ENCODE measurements at regions of chr18 and their contacts with region 1.

Region 1: GRCh38 chr18:48445540-48445939 is 36.4 kb upstream of the ZBTB7C start:
- DNase-seq: peak; percentile 62
- ATAC-seq: peak; percentile 81
- H3K4me3 ChIP-seq: no peak overlapping the region
- H3K27ac ChIP-seq: no peak overlapping the region
- H3K4me1 ChIP-seq: peaks cover 0 to 13% of the 10 kb centered on the region in 2 experiments; a peak in 2 of 4 replicates
- H3K27me3 ChIP-seq: peaks cover 16% of the 10 kb centered on the region; the same call in 1 of the 2 replicates
- CTCF ChIP-seq: peak; percentile 72 to 99 (median 92); a peak in 5 of 6 replicates
- POLR2A ChIP-seq: no peak
- RAD21 ChIP-seq: peak; percentile 64

Region 2: GRCh38 chr18:47772374-47773248 is 672.9 kb before region 1 on chr18:
- CTCF ChIA-PET with region 1: interaction called, 3 read pairs
- POLR2A ChIA-PET with region 1: no interaction called
- RAD21 ChIA-PET with region 1: no interaction called
- intact Hi-C with region 1: loop called (anchors 10 kb)
- DNase-seq: peak; percentile 60
- ATAC-seq: peak; percentile 96
- H3K4me3 ChIP-seq: no peak overlapping the region
- H3K27ac ChIP-seq: 0 out of 2 replicates have a peak overlapping the region, but pooled peaks have one; percentile 26
- H3K4me1 ChIP-seq: peaks cover 0 to 6% of the 10 kb centered on the region in 2 experiments; a peak in 3 of 4 replicates
- H3K27me3 ChIP-seq: no peaks in the 10 kb centered on the region
- CTCF ChIP-seq: peak; percentile 79 to 96 (median 91)
- POLR2A ChIP-seq: no peak
- RAD21 ChIP-seq: peak; percentile 92

Region 3: DNA sequence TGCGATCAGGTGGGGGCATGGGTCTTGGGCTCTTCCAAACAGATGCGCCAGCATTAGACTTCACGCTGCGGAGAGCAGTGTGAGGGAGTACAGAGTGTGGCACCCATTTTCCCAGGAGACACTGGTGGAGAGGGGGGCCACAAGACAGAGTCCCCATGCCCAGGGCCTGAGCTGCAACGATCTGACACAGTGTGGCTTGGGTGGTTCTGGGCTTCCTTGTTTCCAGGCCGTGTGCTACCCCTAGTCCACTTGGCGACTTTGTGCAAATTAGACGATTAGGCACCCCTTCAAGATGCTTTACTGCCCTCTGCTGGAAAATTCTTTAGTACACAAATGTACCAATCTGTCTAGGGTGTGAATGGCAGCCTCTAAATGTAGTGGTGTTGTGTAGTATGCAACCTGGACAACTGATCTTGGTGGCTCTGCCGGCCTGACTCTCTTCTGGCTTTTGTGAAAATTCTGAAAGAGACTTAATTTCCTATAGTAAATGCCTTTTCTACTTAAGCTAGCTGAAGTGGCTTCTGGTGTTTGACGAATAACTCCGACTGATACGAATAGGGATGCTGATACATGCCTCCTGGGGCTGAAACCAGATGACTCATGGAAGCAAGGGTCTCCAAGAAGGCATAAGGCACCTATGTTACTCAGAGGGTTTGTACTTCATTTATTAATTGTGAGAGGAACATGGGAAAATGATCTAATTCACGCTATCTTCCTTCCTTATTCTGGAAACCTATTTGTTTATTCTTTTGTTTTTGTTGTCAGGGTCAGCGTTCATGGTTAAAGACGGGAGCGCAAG is 422.8 kb before region 1 on chr18:
- CTCF ChIA-PET with region 1: interaction called, 34 read pairs
- POLR2A ChIA-PET with region 1: no interaction called
- RAD21 ChIA-PET with region 1: interaction called in 1 of 2 experiments, 3 read pairs
- intact Hi-C with region 1: loop called (anchors 2 kb)
- DNase-seq: peak; percentile 62
- ATAC-seq: peak; percentile 83
- H3K4me3 ChIP-seq: no peak overlapping the region
- H3K27ac ChIP-seq: no peak overlapping the region
- H3K4me1 ChIP-seq: peaks cover 4 to 8% of the 10 kb centered on the region in 2 experiments; a peak in 3 of 4 replicates
- H3K27me3 ChIP-seq: no peaks in the 10 kb centered on the region; the same call in 1 of the 2 replicates
- CTCF ChIP-seq: peak; percentile 51 to 81 (median 66); a peak in 5 of 6 replicates
- POLR2A ChIP-seq: no peak
- RAD21 ChIP-seq: peak; percentile 88

Region 4: DNA sequence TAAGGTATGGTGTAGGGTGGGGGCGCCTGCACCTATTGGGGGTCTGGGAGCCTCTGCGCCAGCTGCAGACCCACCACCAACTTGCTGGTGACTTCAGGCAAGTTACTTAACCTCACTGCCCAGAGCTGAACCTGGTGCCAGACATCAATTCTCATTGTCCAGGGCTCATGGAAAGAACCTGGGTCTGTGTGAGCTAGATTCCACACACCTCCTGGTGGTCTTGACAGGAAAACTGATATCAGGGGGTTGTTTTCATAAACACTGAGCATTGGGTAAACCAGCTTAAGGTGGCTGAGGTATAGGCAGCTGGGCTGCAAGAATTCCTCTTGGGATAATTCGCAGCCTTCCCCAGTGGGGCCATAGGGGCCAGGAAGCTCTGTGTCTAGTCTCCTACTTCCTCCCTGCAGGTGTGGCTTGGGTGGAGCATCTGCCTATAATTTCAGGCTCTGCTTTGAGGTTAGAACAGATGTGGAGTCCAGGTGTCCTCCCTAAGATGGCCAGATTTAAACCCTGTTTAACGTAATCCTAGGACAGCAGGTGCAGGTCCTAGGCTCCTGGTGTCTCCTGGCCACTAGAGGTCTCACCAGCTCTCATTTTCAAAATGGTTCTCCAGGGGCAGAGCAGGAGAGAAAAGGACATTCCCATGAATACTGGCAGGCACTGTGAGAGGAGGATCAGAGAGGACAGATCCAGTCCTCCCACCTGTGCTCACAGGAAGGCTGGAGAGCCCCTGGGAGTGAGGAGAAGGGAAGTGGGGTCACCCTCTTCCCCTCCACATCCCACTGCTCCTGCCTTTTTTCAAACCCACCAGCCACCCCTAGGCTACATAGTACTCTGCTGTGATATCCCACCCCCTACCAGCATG is 414.7 kb before region 1 on chr18:
- CTCF ChIA-PET with region 1: interaction called, 34 read pairs
- POLR2A ChIA-PET with region 1: no interaction called
- RAD21 ChIA-PET with region 1: no interaction called
- intact Hi-C with region 1: loop called (anchors 1 kb)
- DNase-seq: peak; percentile 51
- ATAC-seq: peak; percentile 94
- H3K4me3 ChIP-seq: no peak overlapping the region
- H3K27ac ChIP-seq: no peak overlapping the region
- H3K4me1 ChIP-seq: peaks cover 6 to 9% of the 10 kb centered on the region in 2 experiments; a peak in 2 of 4 replicates
- H3K27me3 ChIP-seq: no peaks in the 10 kb centered on the region
- CTCF ChIP-seq: peak; percentile 75 to 88 (median 84)
- POLR2A ChIP-seq: no peak
- RAD21 ChIP-seq: peak; percentile 82

Region 5: GRCh38 chr18:48037481-48038271 is 407.9 kb before region 1 on chr18:
- CTCF ChIA-PET with region 1: interaction called, 22 read pairs
- POLR2A ChIA-PET with region 1: interaction called, 5 read pairs
- RAD21 ChIA-PET with region 1: no interaction called
- intact Hi-C with region 1: no loop called
- DNase-seq: peak; percentile 26
- ATAC-seq: peak; percentile 94
- H3K4me3 ChIP-seq: no peak overlapping the region
- H3K27ac ChIP-seq: no peak overlapping the region
- H3K4me1 ChIP-seq: peaks cover 0 to 10% of the 10 kb centered on the region in 2 experiments; a peak in 1 of 4 replicates
- H3K27me3 ChIP-seq: no peaks in the 10 kb centered on the region
- CTCF ChIP-seq: peak; percentile 63 to 92 (median 69)
- POLR2A ChIP-seq: no peak
- RAD21 ChIP-seq: peak; percentile 82

Region 6: DNA sequence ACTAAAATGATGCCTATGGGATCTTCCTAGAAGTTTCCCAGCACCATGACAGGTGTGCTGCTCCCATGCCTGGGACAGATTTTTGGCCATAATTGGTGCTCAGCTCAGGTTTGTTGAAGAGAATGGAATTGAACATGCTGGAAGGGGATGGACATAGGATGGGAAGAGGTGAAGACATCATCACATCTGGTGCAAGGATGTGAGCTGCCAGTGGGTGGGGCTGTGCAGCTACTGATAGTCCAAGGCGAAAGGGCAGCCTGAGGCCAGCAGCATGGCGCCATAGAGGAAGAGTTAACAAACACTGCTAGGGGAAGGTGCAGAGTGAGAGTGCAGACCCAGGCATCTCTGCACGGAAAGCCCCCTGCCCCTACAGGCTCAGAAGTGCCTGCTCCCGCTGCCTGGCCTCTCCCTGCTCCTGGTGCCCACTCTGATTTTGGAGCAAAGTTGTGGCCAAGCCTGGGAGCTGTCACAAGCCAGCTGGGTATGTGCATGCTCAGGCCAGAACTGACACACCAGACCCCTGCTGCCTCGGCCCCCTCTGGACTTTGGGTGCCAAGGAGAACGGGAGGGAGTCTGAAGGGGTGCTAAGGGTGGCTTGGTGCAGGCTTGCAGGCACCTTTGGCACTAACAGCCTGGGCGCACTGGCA is 214.9 kb before region 1 on chr18:
- CTCF ChIA-PET with region 1: interaction called, 47 read pairs
- POLR2A ChIA-PET with region 1: interaction called, 3 read pairs
- RAD21 ChIA-PET with region 1: interaction called, 4 to 8 read pairs
- intact Hi-C with region 1: loop called (anchors 1 kb)
- DNase-seq: peak; percentile 57
- ATAC-seq: peak; percentile 98
- H3K4me3 ChIP-seq: no peak overlapping the region
- H3K27ac ChIP-seq: no peak overlapping the region
- H3K4me1 ChIP-seq: peaks cover 0 to 5% of the 10 kb centered on the region in 2 experiments; a peak in 2 of 4 replicates
- H3K27me3 ChIP-seq: no peaks in the 10 kb centered on the region
- CTCF ChIP-seq: peak; percentile 77 to 80 (median 78)
- POLR2A ChIP-seq: no peak
- RAD21 ChIP-seq: peak; percentile 86

Region 7: GRCh38 chr18:48345596-48345995 is 99.9 kb before region 1 on chr18:
- CTCF ChIA-PET with region 1: interaction called, 3 read pairs
- POLR2A ChIA-PET with region 1: no interaction called
- RAD21 ChIA-PET with region 1: no interaction called
- intact Hi-C with region 1: loop called (anchors 5 kb)
- DNase-seq: peak; percentile 12
- ATAC-seq: peak; percentile 75
- H3K4me3 ChIP-seq: no peak overlapping the region
- H3K27ac ChIP-seq: no peak overlapping the region
- H3K4me1 ChIP-seq: no peaks in the 10 kb centered on the region
- H3K27me3 ChIP-seq: no peaks in the 10 kb centered on the region
- CTCF ChIP-seq: peak; percentile 49 to 72 (median 56)
- POLR2A ChIP-seq: no peak
- RAD21 ChIP-seq: peak; percentile 77

Region 8: DNA sequence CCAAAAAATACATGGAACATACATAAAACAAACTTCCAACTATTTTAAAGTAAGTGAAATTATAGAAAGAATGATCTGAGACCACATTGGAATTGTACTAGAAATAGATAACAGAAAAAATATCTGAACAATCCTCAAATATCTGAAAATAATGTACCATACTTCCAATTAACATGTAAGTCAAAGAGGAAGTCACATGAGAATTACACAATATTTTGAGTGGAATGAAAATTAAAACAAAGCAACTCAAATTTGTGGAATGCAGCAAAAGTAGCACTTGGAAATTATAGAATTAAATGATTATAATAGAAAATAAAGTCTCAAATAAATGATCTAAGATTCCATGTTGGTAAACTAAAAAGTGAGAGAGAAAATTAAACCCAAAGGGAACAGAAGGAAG is 55.0 kb after region 1 on chr18:
- CTCF ChIA-PET with region 1: no interaction called
- POLR2A ChIA-PET with region 1: no interaction called
- RAD21 ChIA-PET with region 1: no interaction called
- intact Hi-C with region 1: no loop called
- DNase-seq: no peak
- ATAC-seq: no peak
- H3K4me3 ChIP-seq: no peak overlapping the region
- H3K27ac ChIP-seq: no peak overlapping the region
- H3K4me1 ChIP-seq: no peaks in the 10 kb centered on the region
- H3K27me3 ChIP-seq: no peaks in the 10 kb centered on the region
- CTCF ChIP-seq: no peak
- POLR2A ChIP-seq: no peak
- RAD21 ChIP-seq: no peak

Measured in HCT116 (cell line).